Activated CD8-positive, alpha-beta T cell treated with anti-CD3 and anti-CD28 coated beads for 36 hours (primary cell): ENCODE measurements at regions of chr12 and their contacts with region 1.

Region 1: DNA sequence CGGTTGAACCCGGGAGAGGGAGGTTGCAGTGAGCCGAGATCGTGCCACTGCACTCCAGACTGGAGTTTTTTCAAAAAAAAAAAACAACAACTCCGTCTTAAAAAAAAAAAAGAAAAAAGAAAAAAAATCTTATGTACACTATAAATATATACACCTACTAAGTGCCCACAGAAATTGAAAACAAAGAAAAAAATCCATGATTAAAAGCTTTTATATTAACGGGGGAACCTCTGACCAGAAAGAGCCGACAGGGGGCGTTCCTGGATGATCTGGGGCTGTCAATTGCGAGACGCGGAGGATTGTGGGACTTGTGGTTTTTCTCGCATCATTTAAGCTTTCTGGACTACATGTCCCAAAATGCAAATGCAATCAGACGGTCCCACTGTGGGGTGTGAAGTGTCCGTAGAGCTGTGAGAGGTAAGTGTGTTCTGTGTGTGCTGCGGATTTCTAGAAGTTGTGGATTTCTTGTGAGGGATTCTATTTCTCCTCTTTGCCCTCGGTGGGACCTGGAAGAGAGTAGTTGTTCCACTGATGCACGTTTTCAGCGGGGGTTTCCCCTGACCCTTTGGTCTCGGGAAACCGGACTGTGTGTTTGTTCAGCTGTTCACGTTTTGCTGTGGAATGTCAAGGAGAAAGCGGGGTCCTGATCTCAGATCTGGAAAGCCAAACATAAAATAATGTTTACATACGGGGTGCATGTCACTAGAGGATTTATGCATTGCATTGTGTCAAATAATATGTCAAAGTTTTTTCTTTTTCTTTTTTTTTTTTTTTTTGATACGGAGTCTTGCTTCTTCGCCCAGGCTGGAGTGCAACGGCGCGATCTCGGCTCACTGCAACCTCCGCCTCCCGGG is at the start of gene SIRT4:
- DNase-seq: peak; percentile 98
- ATAC-seq: peak; percentile 99
- H3K4me3 Mint-ChIP-seq: peak within 1 kb of the TSS; percentile 98
- H3K27ac Mint-ChIP-seq: peak within 1 kb of the TSS; percentile 91
- H3K4me1 Mint-ChIP-seq: peaks cover 8% of the 10 kb centered on the region
- H3K27me3 Mint-ChIP-seq: no peaks in the 10 kb centered on the region
- CTCF ChIP-seq: peak; percentile 66
- total RNA-seq, gene SIRT4: 2.7 to 3.3 TPM

Region 2: GRCh38 chr12:120317224-120318105 is 15.3 kb after region 1 on chr12:
- CTCF ChIA-PET with region 1: interaction called, 39 read pairs
- POLR2A ChIA-PET with region 1: interaction called, 14 read pairs
- intact Hi-C with region 1: no loop called
- DNase-seq: peak; percentile 100
- ATAC-seq: peak; percentile 100
- H3K4me3 Mint-ChIP-seq: peak overlapping the region; percentile 96
- H3K27ac Mint-ChIP-seq: peak overlapping the region; percentile 95
- H3K4me1 Mint-ChIP-seq: peaks cover 10% of the 10 kb centered on the region
- H3K27me3 Mint-ChIP-seq: no peaks in the 10 kb centered on the region
- CTCF ChIP-seq: peak; percentile 64

Region 3: DNA sequence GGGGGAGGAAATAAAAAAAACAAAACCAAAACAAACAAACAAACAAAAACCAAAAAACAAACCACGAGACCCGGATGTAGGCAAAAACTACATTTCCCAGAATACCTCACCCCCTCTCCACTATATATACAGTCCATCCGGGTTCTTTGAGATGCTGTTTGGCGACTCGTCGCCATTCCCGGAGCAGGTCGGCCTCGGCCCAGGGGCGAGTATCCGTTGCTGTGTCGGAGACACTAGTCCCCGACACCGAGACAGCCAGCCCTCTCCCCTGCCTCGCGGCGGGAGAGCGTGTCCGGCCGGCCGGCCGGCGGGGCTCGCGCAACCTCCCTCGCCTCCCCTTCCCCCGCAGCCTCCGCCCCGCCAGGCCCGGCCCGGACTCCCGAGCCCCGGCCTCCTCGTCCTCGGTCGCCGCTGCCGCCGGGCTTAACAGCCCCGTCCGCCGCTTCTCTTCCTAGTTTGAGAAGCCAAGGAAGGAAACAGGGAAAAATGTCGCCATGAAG is 232.1 kb after region 1 on chr12 and contains the start of gene RNF10:
- CTCF ChIA-PET with region 1: no interaction called
- POLR2A ChIA-PET with region 1: no interaction called
- intact Hi-C with region 1: no loop called
- DNase-seq: peak; percentile 75
- ATAC-seq: peak; percentile 70
- H3K4me3 Mint-ChIP-seq: peak within 1 kb of the TSS; percentile 97
- H3K27ac Mint-ChIP-seq: peak within 1 kb of the TSS; percentile 97
- H3K4me1 Mint-ChIP-seq: peaks cover 45% of the 10 kb centered on the region
- H3K27me3 Mint-ChIP-seq: no peaks in the 10 kb centered on the region
- CTCF ChIP-seq: no peak
- total RNA-seq, gene RNF10: 155 to 159 TPM